Astrocyte of the cerebellum (primary cell): ENCODE measurements at regions of chr21 and their contacts with region 1.

Region 1: GRCh38 chr21:37575580-37575979 is 209.0 kb downstream of the DYRK1A start:
- DNase-seq: no peak
- H3K4me3 ChIP-seq: no peak overlapping the region
- CTCF ChIP-seq: no peak

Region 2: DNA sequence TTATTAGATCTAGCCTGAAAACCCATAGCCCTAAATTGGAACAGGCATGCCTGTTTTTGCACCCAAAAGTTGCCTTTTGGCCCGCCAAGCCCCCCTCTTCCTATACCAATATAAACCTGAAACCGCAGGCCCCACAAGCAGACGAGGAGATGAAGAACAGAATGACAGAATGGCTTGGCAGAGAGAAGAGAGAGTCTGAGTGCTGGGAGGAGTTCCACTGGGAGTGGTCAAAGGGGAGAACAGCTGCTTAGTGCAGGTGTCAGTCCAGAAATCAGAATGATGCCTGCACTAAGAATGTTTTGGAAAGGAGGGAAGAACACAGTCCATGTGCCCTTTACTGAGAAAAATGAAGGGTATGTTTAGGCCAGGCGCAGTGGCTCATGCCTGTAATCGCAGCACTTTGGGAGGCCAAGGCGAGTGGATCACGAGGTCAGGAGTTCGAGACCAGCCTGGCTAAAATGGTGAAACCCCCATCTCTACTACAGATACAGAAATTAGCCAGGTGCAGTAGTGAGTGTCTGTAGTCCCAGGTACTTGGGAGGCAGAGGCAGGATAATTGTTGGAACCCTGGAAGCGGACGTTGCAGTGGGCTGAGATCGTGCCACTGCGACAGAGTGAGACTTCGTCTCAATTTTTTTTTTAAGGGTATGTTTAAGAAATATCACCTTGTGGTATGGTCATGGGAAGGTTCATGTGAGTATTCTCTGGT is 199.6 kb before region 1 on chr21:
- in situ Hi-C with region 1: loop called (anchors 5 kb)
- DNase-seq: no peak
- H3K4me3 ChIP-seq: no peak overlapping the region
- CTCF ChIP-seq: no peak

Region 3: GRCh38 chr21:37886120-37886519 is 310.5 kb after region 1 on chr21:
- in situ Hi-C with region 1: no loop called
- DNase-seq: no peak
- H3K4me3 ChIP-seq: no peak overlapping the region
- CTCF ChIP-seq: no peak

Region 4: GRCh38 chr21:37945036-37945435 is 369.5 kb after region 1 on chr21:
- in situ Hi-C with region 1: no loop called
- DNase-seq: no peak
- H3K4me3 ChIP-seq: no peak overlapping the region
- CTCF ChIP-seq: no peak